ENCODE measurements at regions of chr2 and their contacts with region 1.

Region 1: DNA sequence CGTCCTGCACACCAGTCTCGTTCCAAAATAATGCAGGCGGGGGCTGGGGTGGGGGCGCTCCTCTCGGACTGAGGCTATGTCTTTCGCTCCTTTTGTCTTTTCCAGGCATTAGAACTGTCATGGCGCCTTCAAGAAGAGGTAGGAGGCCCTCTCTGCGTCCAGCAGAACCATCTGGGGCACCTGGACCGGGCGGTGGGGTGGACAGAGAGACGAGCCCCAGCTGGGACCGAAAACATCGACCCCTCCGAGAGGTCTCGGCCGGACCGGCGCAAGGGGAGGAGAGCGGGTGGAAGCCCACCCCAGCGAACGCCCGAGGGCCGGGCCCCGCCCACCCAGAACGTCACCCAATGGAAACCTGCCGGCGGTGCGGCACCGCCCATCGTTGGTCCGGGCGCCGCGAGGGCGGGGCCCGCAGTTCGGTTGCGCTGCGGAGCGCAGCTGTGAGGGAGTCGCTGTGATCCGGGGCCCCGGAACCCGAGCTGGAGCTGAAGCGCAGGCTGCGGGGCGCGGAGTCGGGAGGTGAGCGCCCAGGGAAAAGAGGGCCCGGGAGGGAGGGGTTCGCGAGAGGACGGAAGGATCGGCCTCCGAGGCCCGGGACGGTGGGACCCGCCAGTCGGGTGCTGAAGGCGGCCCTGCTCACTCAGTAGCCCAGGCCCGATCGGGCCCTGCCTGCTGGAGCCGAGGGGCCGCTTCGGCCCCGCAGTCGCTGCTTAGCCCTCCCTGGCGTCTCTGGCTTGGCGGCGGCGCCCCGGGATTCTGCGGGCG is at the start of gene NRBP1:
- DNase-seq: peak; percentile 93
- H3K4me3 ChIP-seq: peak within 1 kb of the TSS; percentile 97 to 98
- H3K27ac ChIP-seq: peak within 1 kb of the TSS; percentile 99 to 100
- H3K4me1 ChIP-seq: peaks cover 4% of the 10 kb centered on the region
- H3K27me3 ChIP-seq: no peaks in the 10 kb centered on the region
- CTCF ChIP-seq: peak in 1 of 4 experiments; percentile 3
- POLR2A ChIP-seq: peak; percentile 96
- total RNA-seq, gene NRBP1: 42.9 to 83.4 TPM

Region 2: DNA sequence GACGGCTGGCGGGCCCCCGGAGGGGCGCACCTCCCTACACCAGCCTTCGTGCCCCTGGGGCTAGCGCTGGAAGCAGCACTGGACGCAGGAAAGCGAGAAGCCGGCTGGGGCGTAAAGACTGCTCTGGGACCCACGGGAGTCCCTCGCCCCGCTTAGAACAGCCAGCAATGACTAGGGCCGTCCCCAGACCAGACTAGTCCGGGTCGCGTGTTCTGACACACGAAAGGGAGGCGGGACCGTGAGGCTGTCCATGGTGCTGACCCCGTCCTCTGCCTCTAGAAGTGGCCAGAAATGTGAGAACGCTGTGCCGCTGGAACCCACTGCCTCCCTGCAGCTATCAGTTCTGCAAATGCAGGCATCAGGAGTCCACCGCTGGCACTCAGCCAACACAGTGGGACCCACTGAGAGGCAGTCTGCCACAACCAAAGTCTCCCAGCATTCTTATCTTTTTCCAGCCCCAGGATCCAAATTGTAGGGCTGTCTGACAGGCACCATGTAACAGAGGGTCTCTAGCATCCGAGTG is 120.0 kb before region 1 on chr2 and contains the start of gene UCN:
- intact Hi-C with region 1: no loop called
- DNase-seq: no peak
- H3K4me3 ChIP-seq: no peak within 1 kb of the TSS
- H3K27ac ChIP-seq: no peak within 1 kb of the TSS
- H3K4me1 ChIP-seq: peaks cover 10% of the 10 kb centered on the region
- H3K27me3 ChIP-seq: peaks cover 3% of the 10 kb centered on the region
- CTCF ChIP-seq: no peak
- POLR2A ChIP-seq: no peak
- total RNA-seq, gene UCN: 4.2 to 11.2 TPM

Region 3: DNA sequence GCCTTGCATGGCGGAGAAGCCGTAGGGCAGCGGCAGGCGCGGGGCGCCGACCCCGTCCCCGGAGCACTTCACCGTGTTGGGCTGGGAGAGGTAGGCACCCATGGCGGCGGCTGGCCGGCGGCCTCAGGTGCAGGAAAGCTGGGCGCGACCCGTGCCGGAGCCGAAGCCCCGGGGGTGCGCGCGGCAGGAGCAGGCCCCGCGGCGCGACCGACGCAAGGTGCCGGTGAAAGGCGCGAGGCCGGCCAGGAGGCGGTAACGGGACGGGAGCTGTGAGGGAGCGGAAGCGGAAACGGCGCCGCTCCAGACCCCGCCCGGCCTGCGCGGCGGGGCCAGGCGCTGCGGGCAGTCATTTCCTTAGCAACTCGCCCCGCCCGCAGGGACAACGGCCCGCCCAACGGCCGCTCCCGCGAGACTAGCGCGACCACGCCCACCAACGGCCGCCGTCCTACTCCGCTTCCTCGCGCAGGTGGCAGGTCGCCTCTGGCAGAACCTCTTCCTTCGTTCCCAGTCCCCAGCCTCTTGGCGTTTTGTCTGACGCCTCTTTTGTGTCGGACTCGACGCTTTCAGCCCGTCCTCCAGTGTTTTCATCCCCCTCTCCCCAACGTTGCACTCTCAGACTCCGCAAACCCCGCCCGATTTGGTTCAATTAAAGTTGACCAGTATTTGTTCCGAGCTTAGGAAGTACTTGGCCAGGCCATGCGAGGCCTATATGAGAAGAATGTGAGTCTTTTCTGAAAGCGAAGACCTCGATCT is 18.9 kb before region 1 on chr2 and contains the start of gene PPM1G:
- intact Hi-C with region 1: loop called (anchors 2 kb)
- DNase-seq: peak; percentile 95
- H3K4me3 ChIP-seq: peak within 1 kb of the TSS; percentile 76 to 97
- H3K27ac ChIP-seq: peak within 1 kb of the TSS; percentile 76 to 81
- H3K4me1 ChIP-seq: no peaks in the 10 kb centered on the region
- H3K27me3 ChIP-seq: no peaks in the 10 kb centered on the region
- CTCF ChIP-seq: peak in 2 of 4 experiments; percentile 17 to 23
- POLR2A ChIP-seq: peak; percentile 59
- total RNA-seq, gene PPM1G: 57.2 to 65.4 TPM

Region 4: DNA sequence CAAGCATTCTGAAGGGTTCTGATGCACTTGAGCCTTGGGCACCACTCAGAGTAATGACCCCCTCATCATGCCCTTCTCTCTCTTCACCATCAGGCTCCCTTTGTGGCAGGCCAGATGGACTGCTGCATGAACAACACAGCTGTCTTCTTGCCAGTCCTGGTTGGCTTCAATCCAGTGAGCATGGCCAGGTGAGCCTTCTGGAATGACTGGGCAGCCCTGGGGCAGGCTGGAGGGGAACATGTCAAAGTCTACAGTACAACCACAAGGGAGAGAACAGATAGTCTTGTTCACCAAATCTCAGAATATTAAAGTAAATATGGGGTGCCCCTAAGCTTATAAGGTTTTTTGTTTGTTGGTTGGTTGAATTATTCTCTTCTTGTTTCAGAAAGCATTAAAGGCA is 72.6 kb after region 1 on chr2:
- intact Hi-C with region 1: no loop called
- DNase-seq: no peak
- H3K4me3 ChIP-seq: no peak overlapping the region
- H3K27ac ChIP-seq: no peak overlapping the region
- H3K4me1 ChIP-seq: no peaks in the 10 kb centered on the region
- H3K27me3 ChIP-seq: no peaks in the 10 kb centered on the region
- CTCF ChIP-seq: no peak
- POLR2A ChIP-seq: no peak

Measured in prostate gland (tissue), 2 donors.